GM12878 (cell line): ENCODE measurements at regions of chr1 and their contacts with region 1.

Region 1: GRCh38 chr1:44029906-44030604 is 1.2 kb downstream of the SLC6A9 start:
- DNase-seq: peak; percentile 45
- ATAC-seq: peak; percentile 89
- H3K4me3 ChIP-seq: peak overlapping the region; percentile 65
- H3K27ac ChIP-seq: peak overlapping the region; percentile 79
- H3K4me1 ChIP-seq: peaks cover 10% of the 10 kb centered on the region
- H3K27me3 ChIP-seq: no peaks in the 10 kb centered on the region
- CTCF ChIP-seq: no peak
- EP300 ChIP-seq: 0 out of 4 replicates have a peak, but pooled peaks of 1 of the 2 experiments have one; percentile 13
- POLR2A ChIP-seq: peak; percentile 62
- RAD21 ChIP-seq: no peak

Region 2: DNA sequence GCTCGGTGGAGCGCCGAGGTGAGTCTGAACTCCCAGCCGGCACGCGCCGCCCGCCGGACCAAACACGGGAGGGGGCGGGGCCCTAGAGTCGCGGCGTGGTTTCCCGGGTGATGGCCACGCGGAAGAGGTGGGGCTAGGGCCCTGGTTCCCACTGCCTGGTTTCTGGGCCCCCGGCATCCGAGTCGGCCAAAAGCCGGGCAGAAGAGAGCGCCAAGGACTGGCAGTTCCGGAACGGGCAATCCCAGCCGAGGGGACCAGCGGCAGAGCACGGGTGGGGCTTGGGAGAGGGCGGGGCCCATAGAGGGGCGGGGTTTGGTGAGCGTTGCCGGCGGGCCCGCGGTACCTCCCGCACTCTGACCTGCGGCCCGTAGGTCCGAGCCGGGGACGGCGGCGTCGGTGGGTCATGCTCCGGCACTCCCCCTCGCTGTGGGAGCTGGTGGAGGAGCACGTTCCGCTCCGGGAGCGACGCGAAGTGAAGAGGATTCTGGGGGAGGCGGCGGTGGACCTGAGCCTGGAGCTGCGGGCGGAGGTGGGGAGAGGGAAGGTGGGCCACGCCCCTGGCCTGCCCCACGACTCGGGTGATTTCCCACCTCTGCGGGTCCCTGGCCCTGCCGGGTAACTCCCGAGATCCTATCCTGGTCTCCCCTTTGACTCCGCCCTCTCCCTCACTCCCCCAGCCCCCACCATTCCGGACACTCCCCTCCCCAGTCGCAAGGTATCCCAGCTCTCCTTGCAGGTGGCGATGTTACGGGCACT is 38.4 kb before region 1 on chr1 and contains the start of gene CCDC24:
- CTCF ChIA-PET with region 1: interaction called, 25 read pairs
- POLR2A ChIA-PET with region 1: interaction called, 5 read pairs
- RAD21 ChIA-PET with region 1: interaction called, 5 read pairs
- SMC1A ChIA-PET with region 1: no interaction called
- in situ Hi-C with region 1: no loop called
- intact Hi-C with region 1: loop called (anchors 5 kb)
- DNase-seq: no peak
- ATAC-seq: peak; percentile 90
- H3K4me3 ChIP-seq: peak within 1 kb of the TSS; percentile 72
- H3K27ac ChIP-seq: peak within 1 kb of the TSS; percentile 42; the same call in 1 of the 2 replicates
- H3K4me1 ChIP-seq: peaks cover 17% of the 10 kb centered on the region
- H3K27me3 ChIP-seq: no peaks in the 10 kb centered on the region
- CTCF ChIP-seq: no peak
- EP300 ChIP-seq: no peak
- POLR2A ChIP-seq: peak; percentile 74
- RAD21 ChIP-seq: no peak
- polyA plus RNA-seq, gene CCDC24: 0.18 TPM in 1 of 2 experiments, not detected in the other